HepG2 (cell line): ENCODE measurements at regions of chr6 and their contacts with region 1.

Region 1: GRCh38 chr6:131923356-131923755 is 27.8 kb downstream of the CCN2 start:
- DNase-seq: peak; percentile 80
- ATAC-seq: peak; percentile 91
- H3K4me3 ChIP-seq: no peak overlapping the region
- H3K27ac ChIP-seq: no peak overlapping the region
- H3K4me1 ChIP-seq: no peaks in the 10 kb centered on the region
- H3K27me3 ChIP-seq: no peaks in the 10 kb centered on the region
- CTCF ChIP-seq: peak; percentile 91
- EP300 ChIP-seq: no peak
- POLR2A ChIP-seq: no peak
- RAD21 ChIP-seq: peak; percentile 86

Region 2: GRCh38 chr6:131937703-131938631 is 14.6 kb after region 1 on chr6:
- CTCF ChIA-PET with region 1: no interaction called
- POLR2A ChIA-PET with region 1: no interaction called
- in situ Hi-C with region 1: no loop called
- intact Hi-C with region 1: loop called (anchors 2 kb)
- DNase-seq: peak; percentile 100
- ATAC-seq: peak; percentile 98
- H3K4me3 ChIP-seq: peak overlapping the region in 1 of 3 experiments; percentile 7; a peak in 1 of 6 replicates
- H3K27ac ChIP-seq: peak overlapping the region; percentile 56
- H3K4me1 ChIP-seq: peaks cover 46% of the 10 kb centered on the region
- H3K27me3 ChIP-seq: no peaks in the 10 kb centered on the region
- CTCF ChIP-seq: no peak
- EP300 ChIP-seq: peak; percentile 40 to 97; a peak in 3 of 4 replicates
- POLR2A ChIP-seq: no peak
- RAD21 ChIP-seq: no peak

Region 3: GRCh38 chr6:131972741-131973140 is 49.4 kb after region 1 on chr6:
- CTCF ChIA-PET with region 1: no interaction called
- POLR2A ChIA-PET with region 1: no interaction called
- in situ Hi-C with region 1: no loop called
- intact Hi-C with region 1: no loop called
- DNase-seq: no peak
- ATAC-seq: no peak
- H3K4me3 ChIP-seq: no peak overlapping the region
- H3K27ac ChIP-seq: no peak overlapping the region
- H3K4me1 ChIP-seq: peaks cover 47% of the 10 kb centered on the region
- H3K27me3 ChIP-seq: no peaks in the 10 kb centered on the region
- CTCF ChIP-seq: no peak
- EP300 ChIP-seq: no peak
- POLR2A ChIP-seq: no peak
- RAD21 ChIP-seq: no peak

Region 4: GRCh38 chr6:132161283-132161682 is 237.9 kb after region 1 on chr6:
- CTCF ChIA-PET with region 1: interaction called, 85 read pairs
- POLR2A ChIA-PET with region 1: no interaction called
- in situ Hi-C with region 1: loop called (anchors 5 kb)
- intact Hi-C with region 1: loop called (anchors 1 kb)
- DNase-seq: peak; percentile 45
- ATAC-seq: peak; percentile 86
- H3K4me3 ChIP-seq: no peak overlapping the region
- H3K27ac ChIP-seq: no peak overlapping the region
- H3K4me1 ChIP-seq: peaks cover 7% of the 10 kb centered on the region; the same call in 1 of the 2 replicates
- H3K27me3 ChIP-seq: no peaks in the 10 kb centered on the region
- CTCF ChIP-seq: peak; percentile 90
- EP300 ChIP-seq: no peak
- POLR2A ChIP-seq: no peak
- RAD21 ChIP-seq: peak; percentile 84

Region 5: DNA sequence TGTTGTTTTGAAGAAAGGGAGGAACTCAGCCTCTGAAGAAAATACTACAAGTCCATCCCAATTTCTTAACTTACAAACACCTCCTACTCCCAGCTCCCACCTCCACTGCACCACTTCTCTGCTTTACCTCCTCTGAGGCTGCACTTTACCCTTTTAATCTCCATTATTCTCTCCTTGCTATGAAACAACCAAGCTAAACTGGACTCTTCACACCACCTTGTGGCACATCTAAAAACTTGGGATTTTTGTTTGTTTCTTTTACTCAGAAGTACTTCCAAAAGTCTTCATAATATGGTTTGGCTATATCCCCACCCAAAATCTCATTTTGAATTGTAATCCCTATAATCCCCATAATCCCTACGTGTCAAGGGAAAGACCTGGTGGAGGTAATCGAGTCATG is 335.7 kb after region 1 on chr6:
- CTCF ChIA-PET with region 1: interaction called, 4 read pairs
- POLR2A ChIA-PET with region 1: no interaction called
- in situ Hi-C with region 1: no loop called
- intact Hi-C with region 1: loop called (anchors 1 kb)
- DNase-seq: peak; percentile 7
- ATAC-seq: no peak; the same call in 2 of the 3 replicates
- H3K4me3 ChIP-seq: no peak overlapping the region
- H3K27ac ChIP-seq: no peak overlapping the region
- H3K4me1 ChIP-seq: no peaks in the 10 kb centered on the region
- H3K27me3 ChIP-seq: no peaks in the 10 kb centered on the region
- CTCF ChIP-seq: peak; percentile 29; the same call in 1 of the 2 replicates
- EP300 ChIP-seq: no peak
- POLR2A ChIP-seq: no peak
- RAD21 ChIP-seq: no peak

Region 6: DNA sequence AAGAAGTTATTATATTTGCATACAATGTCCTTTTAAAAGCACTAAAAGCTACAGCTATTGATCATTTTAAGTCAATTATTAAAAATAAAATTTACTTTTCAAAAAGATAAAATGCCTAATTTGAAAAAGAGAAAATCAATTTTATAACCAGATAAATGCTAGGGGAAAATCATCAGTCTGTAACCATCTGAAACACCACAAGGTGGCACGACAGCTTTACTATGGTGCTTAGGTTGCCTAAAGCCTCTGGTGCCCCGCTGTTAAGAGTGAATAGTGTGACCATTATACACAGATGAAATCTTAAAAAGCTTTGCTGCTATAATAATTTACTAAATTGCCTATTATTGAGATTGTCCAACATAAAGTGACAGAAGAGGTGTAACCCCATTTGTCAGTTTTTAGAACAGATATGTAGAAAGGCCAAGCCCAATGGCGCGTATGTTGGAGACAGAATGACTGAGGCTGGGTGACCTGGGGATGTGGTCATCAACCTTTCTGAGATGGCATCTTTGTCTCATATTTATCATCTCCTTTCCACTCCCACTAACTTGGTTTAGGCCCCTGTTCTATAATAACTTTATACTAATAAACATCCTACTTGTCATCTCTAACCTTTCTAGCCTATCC is 377.1 kb after region 1 on chr6:
- CTCF ChIA-PET with region 1: interaction called, 16 read pairs
- POLR2A ChIA-PET with region 1: no interaction called
- in situ Hi-C with region 1: loop called (anchors 5 kb)
- intact Hi-C with region 1: loop called (anchors 1 kb)
- DNase-seq: peak; percentile 37
- ATAC-seq: peak; percentile 95
- H3K4me3 ChIP-seq: no peak overlapping the region
- H3K27ac ChIP-seq: no peak overlapping the region
- H3K4me1 ChIP-seq: no peaks in the 10 kb centered on the region
- H3K27me3 ChIP-seq: no peaks in the 10 kb centered on the region; a peak in 1 of 5 replicates
- CTCF ChIP-seq: peak; percentile 82
- EP300 ChIP-seq: no peak
- POLR2A ChIP-seq: no peak
- RAD21 ChIP-seq: peak; percentile 72